Activated B cell treated with CpG ODN at 0.5 μM for 24 hours (primary cell): ENCODE measurements at regions of chr9 and their contacts with region 1.

Region 1: DNA sequence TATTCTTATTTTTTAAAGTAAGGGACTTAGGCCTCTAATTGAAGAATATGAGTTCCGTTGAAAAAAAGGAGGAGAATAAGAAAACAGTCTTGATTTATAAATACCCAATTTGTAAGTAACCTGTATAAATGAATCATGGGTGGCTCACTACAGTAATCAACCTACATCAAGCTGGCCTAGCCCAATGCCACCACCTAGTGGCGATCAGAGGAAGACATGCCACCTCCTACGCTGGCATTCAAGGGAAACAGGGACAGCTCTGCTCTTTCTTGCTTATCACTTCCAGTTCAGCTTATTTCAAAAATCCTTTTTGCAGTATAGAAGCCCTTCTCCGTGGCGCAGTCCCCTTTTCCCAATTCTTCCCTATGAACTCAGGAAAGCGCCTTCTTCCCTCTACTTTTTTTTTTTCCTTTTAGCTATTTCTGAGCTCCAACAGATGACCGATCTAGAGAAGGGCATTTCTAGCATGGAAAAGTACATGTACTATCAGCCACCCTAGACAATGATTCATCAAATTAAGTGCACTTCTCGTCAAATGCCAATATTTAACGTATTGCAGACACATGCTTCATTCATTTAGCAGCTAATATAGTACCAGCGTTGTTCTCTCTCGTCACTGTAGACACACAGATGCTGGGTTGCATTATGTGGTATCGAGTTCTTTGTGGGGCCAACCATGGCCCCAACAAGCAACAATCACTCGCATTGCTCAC is 28.3 kb downstream of the PTPN3 start:
- DNase-seq: peak; percentile 40
- ATAC-seq: peak; percentile 93
- H3K4me3 Mint-ChIP-seq: no peak overlapping the region
- H3K27ac Mint-ChIP-seq: no peak overlapping the region
- H3K4me1 Mint-ChIP-seq: no peaks in the 10 kb centered on the region
- H3K27me3 Mint-ChIP-seq: peaks cover 27% of the 10 kb centered on the region
- CTCF ChIP-seq: peak; percentile 51

Region 2: GRCh38 chr9:108903420-108904103 is 566.2 kb before region 1 on chr9:
- CTCF ChIA-PET with region 1: no interaction called
- POLR2A ChIA-PET with region 1: no interaction called
- intact Hi-C with region 1: loop called (anchors 5 kb)
- DNase-seq: no peak
- ATAC-seq: no peak
- H3K4me3 Mint-ChIP-seq: no peak overlapping the region
- H3K27ac Mint-ChIP-seq: no peak overlapping the region
- H3K4me1 Mint-ChIP-seq: no peaks in the 10 kb centered on the region
- H3K27me3 Mint-ChIP-seq: no peaks in the 10 kb centered on the region
- CTCF ChIP-seq: no peak

Region 3: GRCh38 chr9:109192732-109193361 is 277.0 kb before region 1 on chr9:
- CTCF ChIA-PET with region 1: no interaction called
- POLR2A ChIA-PET with region 1: no interaction called
- intact Hi-C with region 1: loop called (anchors 2 kb)
- DNase-seq: no peak
- ATAC-seq: no peak
- H3K4me3 Mint-ChIP-seq: no peak overlapping the region
- H3K27ac Mint-ChIP-seq: no peak overlapping the region
- H3K4me1 Mint-ChIP-seq: no peaks in the 10 kb centered on the region
- H3K27me3 Mint-ChIP-seq: peaks cover 9% of the 10 kb centered on the region
- CTCF ChIP-seq: no peak

Region 4: DNA sequence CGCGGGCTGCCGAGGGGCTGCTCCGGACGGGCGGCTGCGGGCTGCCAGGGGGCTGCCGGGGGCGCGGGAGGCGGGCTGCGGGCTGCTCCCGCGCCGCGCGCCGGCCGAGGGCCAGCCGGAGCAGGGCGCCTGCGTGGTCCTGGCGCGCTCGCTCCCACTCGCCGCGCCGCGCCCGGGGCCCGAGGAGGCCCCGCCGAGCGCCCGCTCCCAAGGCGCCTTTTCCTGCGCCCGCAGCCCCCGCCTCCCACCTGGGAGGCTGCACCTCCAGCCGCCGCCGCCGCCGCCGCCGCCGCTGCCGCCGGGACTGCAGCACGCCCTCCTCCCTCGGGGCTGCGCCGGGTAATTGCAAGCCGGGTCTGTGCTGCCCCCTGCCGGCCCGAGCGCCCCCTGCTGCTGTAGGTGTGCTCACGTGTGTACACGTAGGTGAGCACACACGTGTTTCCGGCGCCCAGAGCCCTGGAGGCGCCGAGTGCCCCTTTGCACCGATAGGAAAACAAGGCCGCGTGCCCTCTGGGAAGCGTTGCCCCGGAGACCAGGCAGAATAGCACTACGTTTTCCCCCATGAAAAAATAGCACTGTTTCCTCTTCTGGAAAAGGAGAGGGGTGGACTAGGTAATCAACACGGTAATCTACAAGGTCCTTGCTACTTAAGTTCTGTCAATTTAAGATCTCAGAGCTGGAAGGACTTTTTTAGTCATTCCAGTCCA is 148.9 kb before region 1 on chr9 and contains the start of gene EPB41L4B:
- CTCF ChIA-PET with region 1: no interaction called
- POLR2A ChIA-PET with region 1: no interaction called
- intact Hi-C with region 1: loop called (anchors 1 kb)
- DNase-seq: peak; percentile 81
- ATAC-seq: peak; percentile 96
- H3K4me3 Mint-ChIP-seq: peak within 1 kb of the TSS; percentile 83
- H3K27ac Mint-ChIP-seq: no peak within 1 kb of the TSS
- H3K4me1 Mint-ChIP-seq: peaks cover 19% of the 10 kb centered on the region
- H3K27me3 Mint-ChIP-seq: peaks cover 57% of the 10 kb centered on the region
- CTCF ChIP-seq: peak; percentile 60
- total RNA-seq, gene EPB41L4B: 5.3 and 6.1 TPM in 2 replicates

Region 5: DNA sequence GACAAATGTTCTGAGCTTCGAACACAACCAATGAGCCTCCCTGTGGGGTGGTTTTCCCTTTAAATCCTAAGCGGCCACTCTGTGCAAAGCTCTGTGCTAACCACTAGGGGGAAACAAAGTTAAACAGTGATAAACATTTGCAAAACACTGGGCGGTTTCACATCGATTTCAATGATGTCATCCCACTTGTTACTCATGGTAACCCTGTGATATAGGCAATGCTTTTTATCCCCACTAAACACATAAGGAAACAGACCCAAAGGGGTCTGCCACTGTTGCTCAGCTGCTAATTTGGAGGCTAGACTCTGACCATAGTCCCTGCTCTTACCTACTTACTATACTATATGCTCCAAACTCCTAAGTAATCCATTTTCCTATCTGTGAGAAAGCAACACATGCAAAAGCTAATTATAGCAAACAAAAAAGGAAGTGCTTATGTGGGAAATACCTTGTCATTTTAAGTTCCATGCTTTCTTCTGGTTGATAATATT is 29.0 kb before region 1 on chr9:
- CTCF ChIA-PET with region 1: interaction called, 6 read pairs
- POLR2A ChIA-PET with region 1: no interaction called
- intact Hi-C with region 1: loop called (anchors 1 kb)
- DNase-seq: no peak
- ATAC-seq: peak; percentile 78
- H3K4me3 Mint-ChIP-seq: no peak overlapping the region
- H3K27ac Mint-ChIP-seq: no peak overlapping the region
- H3K4me1 Mint-ChIP-seq: peaks cover 23% of the 10 kb centered on the region
- H3K27me3 Mint-ChIP-seq: peaks cover 24% of the 10 kb centered on the region
- CTCF ChIP-seq: no peak

Region 6: DNA sequence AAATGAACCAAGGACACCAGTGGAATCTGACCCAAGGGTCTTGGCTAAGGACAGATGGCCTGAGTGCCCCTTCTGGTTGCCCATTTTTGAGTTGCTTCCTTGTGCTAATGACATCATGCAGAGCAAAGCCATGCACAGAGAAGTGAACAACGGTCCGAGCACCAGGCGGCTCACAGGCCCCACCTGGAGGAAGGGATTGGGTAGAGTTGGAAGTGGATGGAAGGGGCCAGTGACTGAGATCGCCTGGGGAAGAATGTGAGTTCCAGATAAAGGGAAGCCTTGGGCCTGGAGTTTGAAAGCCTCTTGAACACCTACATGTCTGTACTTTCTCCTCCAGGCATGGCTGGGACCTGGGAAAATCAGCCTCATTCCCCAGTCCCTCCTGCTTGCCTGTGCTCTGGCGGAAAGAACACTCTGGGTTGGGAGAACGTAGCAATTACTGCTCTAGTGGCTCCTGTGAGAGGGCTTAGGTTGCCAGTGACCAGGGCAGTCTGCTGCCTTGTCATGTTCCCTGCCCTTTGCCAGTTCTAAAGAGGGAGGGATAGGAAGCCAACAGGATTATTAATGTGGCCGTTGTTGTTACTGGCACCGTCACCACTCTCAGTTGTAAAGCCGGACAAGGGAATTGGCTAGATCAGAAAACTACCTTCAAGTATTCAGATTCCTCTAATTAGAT is 90.8 kb after region 1 on chr9:
- CTCF ChIA-PET with region 1: no interaction called
- POLR2A ChIA-PET with region 1: no interaction called
- intact Hi-C with region 1: no loop called
- DNase-seq: no peak
- ATAC-seq: no peak
- H3K4me3 Mint-ChIP-seq: no peak overlapping the region
- H3K27ac Mint-ChIP-seq: no peak overlapping the region
- H3K4me1 Mint-ChIP-seq: no peaks in the 10 kb centered on the region
- H3K27me3 Mint-ChIP-seq: peaks cover 18% of the 10 kb centered on the region
- CTCF ChIP-seq: no peak

Region 7: DNA sequence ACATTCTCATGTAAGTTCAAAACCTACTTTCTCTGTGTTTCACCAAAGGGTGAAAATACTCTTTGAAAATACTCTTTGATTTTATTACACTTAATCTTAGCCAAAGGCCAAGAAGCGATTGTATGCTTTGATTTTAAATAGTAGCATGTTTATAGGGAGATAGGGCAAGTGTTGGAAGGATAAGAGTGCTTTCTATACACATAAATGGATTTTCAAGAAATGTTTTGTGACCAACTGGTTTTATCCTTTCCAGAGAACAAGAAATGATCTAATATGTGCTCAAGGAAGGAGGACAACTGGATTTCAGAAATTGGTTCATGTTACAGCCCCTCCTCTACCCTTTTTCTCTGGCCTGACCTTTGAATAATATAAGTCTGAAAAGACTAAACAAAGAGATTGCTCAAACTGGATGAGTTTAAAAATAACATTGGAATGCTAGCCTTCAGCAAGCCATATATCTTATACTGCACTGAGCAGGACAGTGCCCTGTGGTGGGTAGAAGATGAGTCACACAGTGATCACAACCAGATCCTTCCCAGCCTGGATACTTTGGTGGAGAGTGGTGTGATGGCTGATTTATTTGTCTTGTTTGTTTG is 323.2 kb after region 1 on chr9:
- CTCF ChIA-PET with region 1: no interaction called
- POLR2A ChIA-PET with region 1: no interaction called
- intact Hi-C with region 1: no loop called
- DNase-seq: no peak
- ATAC-seq: no peak
- H3K4me3 Mint-ChIP-seq: no peak overlapping the region
- H3K27ac Mint-ChIP-seq: no peak overlapping the region
- H3K4me1 Mint-ChIP-seq: no peaks in the 10 kb centered on the region
- H3K27me3 Mint-ChIP-seq: peaks cover 8% of the 10 kb centered on the region
- CTCF ChIP-seq: no peak